PC-3 (cell line): ENCODE measurements at regions of chr12 and their contacts with region 1.

Region 1: DNA sequence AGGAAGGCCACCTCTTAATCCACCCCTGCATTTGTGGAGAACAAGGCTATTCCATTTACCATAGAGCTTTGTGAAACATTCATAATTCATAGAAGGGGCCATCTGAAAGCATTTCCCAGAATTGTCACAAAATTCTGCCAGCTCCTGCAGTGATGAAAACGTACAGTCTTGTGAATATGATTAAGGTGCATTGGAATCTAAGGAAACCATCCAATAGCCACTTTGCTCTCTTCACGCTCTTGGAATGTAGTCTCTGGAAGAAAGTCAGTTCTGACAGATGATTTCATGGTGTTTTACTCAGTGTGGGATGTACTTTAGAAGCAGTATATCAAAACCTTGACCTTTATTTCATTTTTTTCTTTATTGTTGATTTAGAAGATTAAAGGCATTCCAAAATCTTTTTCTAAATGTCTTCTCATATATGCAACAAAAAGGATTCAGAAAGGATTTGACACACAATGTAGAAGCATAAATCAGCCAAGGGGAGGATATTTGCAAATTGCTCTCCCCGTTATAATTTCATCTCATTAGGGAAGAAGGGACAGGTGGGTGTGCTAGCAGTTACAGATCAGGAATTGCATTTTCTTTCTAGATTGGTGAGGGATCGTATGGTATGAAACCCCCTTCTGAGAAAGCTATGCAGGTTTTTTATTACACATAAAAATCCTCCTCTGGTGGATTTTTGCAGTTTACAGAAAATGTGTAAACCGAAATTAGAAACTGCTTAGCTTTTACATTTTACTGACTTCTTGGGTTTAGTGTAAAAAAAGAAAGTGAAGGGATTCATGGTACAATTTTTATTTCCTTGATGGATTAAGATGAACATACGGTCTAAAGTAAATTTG is 390.2 kb downstream of the LRIG3 start:
- DNase-seq: peak; percentile 86
- ATAC-seq: peak; percentile 46
- H3K4me3 ChIP-seq: peak overlapping the region; percentile 13
- H3K27ac ChIP-seq: peak overlapping the region; percentile 95
- H3K4me1 ChIP-seq: peaks cover 52% of the 10 kb centered on the region
- H3K27me3 ChIP-seq: no peaks in the 10 kb centered on the region
- CTCF ChIP-seq: no peak

Region 2: DNA sequence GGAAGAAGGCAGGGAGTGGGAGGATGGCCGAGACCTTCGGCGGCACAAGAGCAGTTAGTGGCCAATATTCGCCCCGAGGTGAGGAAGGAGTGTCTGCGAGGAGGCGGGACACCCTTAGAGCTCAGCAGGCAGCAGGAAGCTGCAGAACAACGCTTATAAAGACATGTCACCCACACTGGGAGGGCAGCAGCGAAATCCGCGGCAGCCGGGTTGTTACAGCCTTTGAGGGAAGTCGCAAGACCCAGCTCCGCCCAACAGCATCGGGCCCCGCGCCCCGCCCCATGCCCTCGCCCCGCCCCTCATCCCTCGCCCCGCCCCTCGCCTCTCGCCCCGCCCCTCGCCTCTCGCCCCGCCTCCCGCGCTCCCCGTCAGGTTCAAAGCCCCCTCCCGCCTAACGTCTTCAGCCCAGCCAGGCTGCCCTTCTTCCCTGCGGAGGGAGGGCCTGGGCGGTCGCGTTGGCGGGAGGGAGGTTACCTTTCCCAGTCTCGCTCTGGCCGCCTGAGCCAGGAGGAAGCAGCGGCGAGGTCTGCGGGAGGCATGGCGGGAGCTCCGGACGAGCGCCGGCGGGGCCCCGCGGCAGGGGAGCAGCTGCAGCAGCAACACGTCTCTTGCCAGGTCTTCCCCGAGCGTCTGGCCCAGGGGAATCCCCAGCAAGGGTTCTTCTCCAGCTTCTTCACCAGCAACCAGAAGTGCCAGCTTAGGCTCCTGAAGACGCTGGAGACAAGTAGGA is 588.8 kb before region 1 on chr12 and contains the start of gene ATP23:
- CTCF ChIA-PET with region 1: no interaction called
- POLR2A ChIA-PET with region 1: interaction called, 26 read pairs
- intact Hi-C with region 1: no loop called
- DNase-seq: peak; percentile 93
- ATAC-seq: peak; percentile 94
- H3K4me3 ChIP-seq: peak within 1 kb of the TSS; percentile 86
- H3K27ac ChIP-seq: peak within 1 kb of the TSS; percentile 35
- H3K4me1 ChIP-seq: peaks cover 16% of the 10 kb centered on the region
- H3K27me3 ChIP-seq: no peaks in the 10 kb centered on the region
- CTCF ChIP-seq: no peak
- total RNA-seq, gene ATP23: 14.7 and 19.4 TPM in 2 replicates

Region 3: GRCh38 chr12:57983146-57983857 is 546.8 kb before region 1 on chr12:
- CTCF ChIA-PET with region 1: interaction called, 3 read pairs
- POLR2A ChIA-PET with region 1: no interaction called
- intact Hi-C with region 1: loop called (anchors 10 kb)
- DNase-seq: peak; percentile 73
- ATAC-seq: no peak
- H3K4me3 ChIP-seq: no peak overlapping the region
- H3K27ac ChIP-seq: no peak overlapping the region
- H3K4me1 ChIP-seq: peaks cover 12% of the 10 kb centered on the region; the same call in 1 of the 2 replicates
- H3K27me3 ChIP-seq: no peaks in the 10 kb centered on the region
- CTCF ChIP-seq: peak; percentile 78

Region 4: GRCh38 chr12:58413794-58414193 is 116.3 kb before region 1 on chr12:
- CTCF ChIA-PET with region 1: no interaction called
- POLR2A ChIA-PET with region 1: interaction called, 3 read pairs
- intact Hi-C with region 1: loop called (anchors 2 kb)
- DNase-seq: peak; percentile 93
- ATAC-seq: peak; percentile 84
- H3K4me3 ChIP-seq: peak overlapping the region; percentile 56
- H3K27ac ChIP-seq: peak overlapping the region; percentile 98
- H3K4me1 ChIP-seq: peaks cover 47% of the 10 kb centered on the region
- H3K27me3 ChIP-seq: no peaks in the 10 kb centered on the region
- CTCF ChIP-seq: no peak

Region 5: GRCh38 chr12:58425481-58426392 is 104.4 kb before region 1 on chr12:
- CTCF ChIA-PET with region 1: no interaction called
- POLR2A ChIA-PET with region 1: no interaction called
- intact Hi-C with region 1: loop called (anchors 2 kb)
- DNase-seq: peak; percentile 95
- ATAC-seq: peak; percentile 87
- H3K4me3 ChIP-seq: peak overlapping the region; percentile 51
- H3K27ac ChIP-seq: peak overlapping the region; percentile 99
- H3K4me1 ChIP-seq: peaks cover 42% of the 10 kb centered on the region
- H3K27me3 ChIP-seq: no peaks in the 10 kb centered on the region
- CTCF ChIP-seq: no peak

Region 6: DNA sequence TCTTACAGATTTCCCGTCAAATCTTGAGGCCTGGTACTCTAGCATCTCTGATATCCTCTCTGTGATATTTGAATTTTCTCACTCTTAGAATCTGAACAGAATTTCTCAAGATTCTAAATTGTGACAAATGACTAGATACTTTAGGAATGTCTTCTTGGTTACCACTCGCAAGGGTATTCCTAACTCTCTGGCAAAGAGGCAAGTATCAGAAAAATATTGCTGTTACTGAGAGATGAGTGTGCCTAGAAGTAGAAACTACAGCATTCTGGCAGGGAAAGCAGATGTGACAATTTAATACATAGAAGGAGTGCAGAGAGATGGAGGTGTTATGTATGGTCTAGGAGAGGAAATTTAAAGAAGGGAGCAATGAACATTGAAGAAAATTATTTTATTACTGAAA is 77.6 kb before region 1 on chr12:
- CTCF ChIA-PET with region 1: no interaction called
- POLR2A ChIA-PET with region 1: no interaction called
- intact Hi-C with region 1: no loop called
- DNase-seq: no peak
- ATAC-seq: no peak
- H3K4me3 ChIP-seq: no peak overlapping the region
- H3K27ac ChIP-seq: no peak overlapping the region
- H3K4me1 ChIP-seq: no peaks in the 10 kb centered on the region
- H3K27me3 ChIP-seq: no peaks in the 10 kb centered on the region
- CTCF ChIP-seq: no peak

Region 7: GRCh38 chr12:58465418-58465817 is 64.7 kb before region 1 on chr12:
- CTCF ChIA-PET with region 1: no interaction called
- POLR2A ChIA-PET with region 1: no interaction called
- intact Hi-C with region 1: loop called (anchors 10 kb)
- DNase-seq: peak; percentile 58
- ATAC-seq: peak; percentile 88
- H3K4me3 ChIP-seq: no peak overlapping the region
- H3K27ac ChIP-seq: no peak overlapping the region
- H3K4me1 ChIP-seq: peaks cover 10% of the 10 kb centered on the region
- H3K27me3 ChIP-seq: no peaks in the 10 kb centered on the region
- CTCF ChIP-seq: no peak

Region 8: GRCh38 chr12:58481811-58482210 is 48.3 kb before region 1 on chr12:
- CTCF ChIA-PET with region 1: no interaction called
- POLR2A ChIA-PET with region 1: no interaction called
- intact Hi-C with region 1: loop called (anchors 5 kb)
- DNase-seq: no peak
- ATAC-seq: no peak
- H3K4me3 ChIP-seq: no peak overlapping the region
- H3K27ac ChIP-seq: no peak overlapping the region
- H3K4me1 ChIP-seq: peaks cover 6% of the 10 kb centered on the region; the same call in 1 of the 2 replicates
- H3K27me3 ChIP-seq: no peaks in the 10 kb centered on the region
- CTCF ChIP-seq: no peak

Region 9: GRCh38 chr12:58509116-58509885 is 20.8 kb before region 1 on chr12:
- CTCF ChIA-PET with region 1: no interaction called
- POLR2A ChIA-PET with region 1: no interaction called
- intact Hi-C with region 1: no loop called
- DNase-seq: peak; percentile 91
- ATAC-seq: peak; percentile 85
- H3K4me3 ChIP-seq: no peak overlapping the region
- H3K27ac ChIP-seq: peak overlapping the region; percentile 99
- H3K4me1 ChIP-seq: peaks cover 23% of the 10 kb centered on the region
- H3K27me3 ChIP-seq: no peaks in the 10 kb centered on the region
- CTCF ChIP-seq: no peak